ENCODE measurements at regions of chr17 and their contacts with region 1.

Region 1: DNA sequence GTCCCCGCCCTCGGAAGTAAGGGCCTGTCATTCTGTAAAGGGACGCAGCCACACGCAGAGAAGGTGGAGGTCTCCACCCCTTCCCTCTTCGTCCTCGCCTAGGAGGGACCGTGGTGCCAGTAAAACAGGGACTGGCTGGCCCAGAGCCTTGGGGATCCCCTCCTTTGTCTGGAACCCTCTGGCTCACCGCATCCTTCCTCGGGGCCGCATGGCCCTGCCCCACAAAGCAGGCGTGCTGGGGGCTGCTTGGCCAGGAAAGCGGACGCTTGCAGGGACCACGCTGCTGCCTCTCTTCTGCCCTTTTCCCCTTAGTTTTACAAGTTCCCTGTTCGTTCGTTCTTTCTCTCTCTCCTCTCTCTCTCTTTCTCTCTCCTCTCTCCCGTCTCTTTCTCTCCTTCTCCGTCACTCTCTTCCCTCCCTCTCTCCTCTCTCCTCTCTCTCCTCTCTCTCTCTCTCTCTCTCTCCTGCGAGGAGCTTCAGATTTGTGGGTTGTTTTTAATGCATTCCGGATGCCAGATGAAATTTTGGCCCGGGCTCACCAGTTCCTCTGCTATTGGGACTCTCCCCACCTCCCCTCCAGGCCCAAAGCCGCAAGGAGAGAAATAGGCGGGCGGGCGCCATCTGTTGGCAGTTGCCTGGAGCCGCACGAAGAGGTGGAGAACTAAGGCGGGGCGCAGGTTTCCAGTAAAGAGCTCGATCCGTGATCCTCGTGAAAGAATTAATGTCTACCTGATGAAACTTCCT is 35.1 kb upstream of the CDRT4 start:
- DNase-seq: peak; percentile 58
- H3K4me3 ChIP-seq: no peak overlapping the region
- H3K27ac ChIP-seq: peak overlapping the region; percentile 13
- H3K4me1 ChIP-seq: peaks cover 15% of the 10 kb centered on the region
- H3K27me3 ChIP-seq: no peaks in the 10 kb centered on the region
- CTCF ChIP-seq: peak; percentile 90 to 91
- POLR2A ChIP-seq: no peak

Region 2: GRCh38 chr17:15257258-15257788 is 245.2 kb before region 1 on chr17:
- CTCF ChIA-PET with region 1: interaction called, 410 read pairs
- POLR2A ChIA-PET with region 1: interaction called, 4 read pairs
- dilution Hi-C with region 1: no loop called
- intact Hi-C with region 1: loop called (anchors 1 kb)
- DNase-seq: peak; percentile 70
- H3K4me3 ChIP-seq: peak overlapping the region in 1 of 3 experiments; percentile 12
- H3K27ac ChIP-seq: no peak overlapping the region
- H3K4me1 ChIP-seq: peaks cover 25% of the 10 kb centered on the region
- H3K27me3 ChIP-seq: no peaks in the 10 kb centered on the region
- CTCF ChIP-seq: peak; percentile 87 to 92
- POLR2A ChIP-seq: peak; percentile 62

Region 3: GRCh38 chr17:15273141-15273793 is 229.3 kb before region 1 on chr17:
- CTCF ChIA-PET with region 1: interaction called, 10 read pairs
- POLR2A ChIA-PET with region 1: no interaction called
- dilution Hi-C with region 1: no loop called
- intact Hi-C with region 1: no loop called
- DNase-seq: no peak
- H3K4me3 ChIP-seq: no peak overlapping the region
- H3K27ac ChIP-seq: no peak overlapping the region
- H3K4me1 ChIP-seq: no peaks in the 10 kb centered on the region
- H3K27me3 ChIP-seq: peaks cover 0 to 2% of the 10 kb centered on the region in 2 experiments
- CTCF ChIP-seq: no peak
- POLR2A ChIP-seq: no peak

Region 4: GRCh38 chr17:15436473-15437302 is 65.9 kb before region 1 on chr17:
- CTCF ChIA-PET with region 1: interaction called, 56 read pairs
- POLR2A ChIA-PET with region 1: no interaction called
- dilution Hi-C with region 1: no loop called
- intact Hi-C with region 1: loop called (anchors 1 kb)
- DNase-seq: peak; percentile 32
- H3K4me3 ChIP-seq: no peak overlapping the region
- H3K27ac ChIP-seq: no peak overlapping the region
- H3K4me1 ChIP-seq: peaks cover 23% of the 10 kb centered on the region
- H3K27me3 ChIP-seq: no peaks in the 10 kb centered on the region
- CTCF ChIP-seq: peak; percentile 39 to 47
- POLR2A ChIP-seq: no peak

Region 5: DNA sequence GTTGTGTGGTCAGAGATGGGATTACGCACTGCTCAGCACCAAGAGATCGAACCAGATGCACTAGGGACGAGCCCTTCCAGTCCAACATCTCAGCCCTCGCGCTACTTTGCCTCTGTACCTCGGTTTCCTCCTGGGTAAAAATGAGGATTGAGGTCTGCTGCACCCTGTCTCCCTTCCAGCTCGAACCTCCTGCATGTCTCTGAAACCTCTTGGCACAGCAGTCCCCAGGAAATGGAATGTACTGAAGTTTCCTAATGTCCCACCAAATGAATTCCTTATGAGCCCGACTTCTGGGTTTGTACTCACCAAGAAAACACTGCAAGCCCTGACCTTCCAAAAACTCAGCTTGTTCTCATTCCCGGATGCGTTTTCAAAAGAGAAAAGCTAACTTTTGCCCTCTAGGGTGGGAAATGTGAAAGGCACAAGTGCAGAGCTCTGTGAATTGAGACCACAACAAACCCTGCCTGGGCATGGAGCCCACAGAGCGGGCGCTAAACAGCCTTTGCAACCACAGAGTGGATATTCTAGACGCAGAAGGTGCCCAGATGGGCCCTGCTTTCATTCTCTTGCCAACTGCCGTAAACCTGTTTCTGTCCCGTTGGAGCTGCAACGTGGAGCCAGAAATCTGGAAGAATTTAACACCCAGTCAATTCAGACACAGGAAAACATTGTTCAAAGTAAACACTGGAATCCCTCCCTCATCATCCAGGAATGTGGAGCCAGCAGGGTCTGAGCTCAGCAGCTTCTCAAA is 45.4 kb before region 1 on chr17:
- CTCF ChIA-PET with region 1: interaction called, 19 read pairs
- POLR2A ChIA-PET with region 1: no interaction called
- dilution Hi-C with region 1: no loop called
- intact Hi-C with region 1: no loop called
- DNase-seq: peak; percentile 62
- H3K4me3 ChIP-seq: no peak overlapping the region
- H3K27ac ChIP-seq: no peak overlapping the region
- H3K4me1 ChIP-seq: peaks cover 12% of the 10 kb centered on the region
- H3K27me3 ChIP-seq: no peaks in the 10 kb centered on the region
- CTCF ChIP-seq: peak in 1 of 2 donors; percentile 22
- POLR2A ChIP-seq: no peak

Region 6: DNA sequence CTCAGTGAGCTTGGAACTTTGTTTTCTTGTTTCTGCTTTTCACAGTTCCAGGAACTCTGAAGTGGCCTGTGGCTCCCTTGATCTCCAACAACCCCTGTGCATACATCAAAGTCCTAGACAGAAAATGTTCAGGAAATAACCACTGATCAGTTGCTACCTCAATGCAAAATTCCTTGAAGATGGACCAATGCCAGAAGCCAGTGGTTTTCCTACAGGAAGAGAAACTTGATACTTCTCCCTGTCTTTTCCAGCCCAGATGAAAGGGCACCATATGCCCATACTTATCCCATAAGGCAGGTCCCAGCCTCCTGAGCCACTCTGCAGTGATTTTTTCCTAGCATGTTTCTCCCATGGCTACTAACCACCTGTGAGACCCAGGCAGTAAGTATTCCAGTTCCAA is 22.8 kb before region 1 on chr17:
- CTCF ChIA-PET with region 1: interaction called, 33 read pairs
- POLR2A ChIA-PET with region 1: no interaction called
- dilution Hi-C with region 1: no loop called
- intact Hi-C with region 1: no loop called
- DNase-seq: peak; percentile 75
- H3K4me3 ChIP-seq: no peak overlapping the region
- H3K27ac ChIP-seq: peak overlapping the region; percentile 19
- H3K4me1 ChIP-seq: peaks cover 22% of the 10 kb centered on the region
- H3K27me3 ChIP-seq: no peaks in the 10 kb centered on the region
- CTCF ChIP-seq: no peak
- POLR2A ChIP-seq: no peak

Region 7: DNA sequence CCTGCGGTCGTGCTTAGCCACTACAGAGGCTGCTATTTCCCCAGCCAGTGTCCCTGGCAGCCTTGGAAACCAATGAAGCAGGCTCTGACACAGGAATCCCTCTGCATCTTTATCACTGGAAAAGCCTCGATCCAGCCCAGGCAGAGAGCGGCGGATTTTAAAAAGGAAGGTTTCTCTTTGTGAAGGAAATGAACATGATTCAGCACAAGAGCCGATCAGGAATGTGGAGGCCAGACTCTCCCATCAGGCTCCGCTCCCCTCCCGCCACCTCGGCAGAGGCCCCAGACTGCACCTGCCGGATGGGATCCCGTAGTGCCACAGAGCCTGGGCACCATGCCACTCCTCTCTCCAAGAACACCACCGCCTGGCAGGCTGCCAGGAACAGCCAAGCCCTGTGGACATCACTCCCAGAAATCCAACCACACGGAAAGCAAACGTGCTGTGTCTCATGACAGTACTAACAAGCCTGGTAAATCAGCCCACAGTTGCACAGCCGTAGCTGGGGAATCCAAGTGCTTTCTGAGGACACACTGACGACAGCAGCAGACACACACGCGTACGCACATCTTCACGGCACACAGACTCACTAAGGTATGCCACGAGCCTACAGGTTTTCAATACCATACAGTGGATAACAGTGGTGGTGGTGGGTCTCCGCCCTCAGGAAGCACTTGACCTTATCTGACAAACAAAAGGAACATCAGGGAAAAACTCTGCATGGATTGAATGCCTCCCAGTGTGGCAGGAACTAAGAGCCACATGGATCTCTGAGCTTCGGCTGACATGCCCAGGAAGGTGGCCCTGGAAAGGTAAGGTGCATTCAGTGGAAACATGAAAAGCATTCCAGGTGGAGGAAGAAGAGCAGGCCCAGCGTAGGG is 984.1 kb after region 1 on chr17:
- CTCF ChIA-PET with region 1: no interaction called
- POLR2A ChIA-PET with region 1: no interaction called
- dilution Hi-C with region 1: no loop called
- intact Hi-C with region 1: no loop called
- DNase-seq: peak; percentile 83
- H3K4me3 ChIP-seq: peak overlapping the region in 2 of 3 experiments; percentile 5 to 9
- H3K27ac ChIP-seq: peak overlapping the region; percentile 80
- H3K4me1 ChIP-seq: peaks cover 41% of the 10 kb centered on the region
- H3K27me3 ChIP-seq: peaks cover 0 to 6% of the 10 kb centered on the region in 2 experiments
- CTCF ChIP-seq: no peak
- POLR2A ChIP-seq: peak; percentile 52